ENCODE measurements at regions of chr7 and their contacts with region 1.

Region 1: DNA sequence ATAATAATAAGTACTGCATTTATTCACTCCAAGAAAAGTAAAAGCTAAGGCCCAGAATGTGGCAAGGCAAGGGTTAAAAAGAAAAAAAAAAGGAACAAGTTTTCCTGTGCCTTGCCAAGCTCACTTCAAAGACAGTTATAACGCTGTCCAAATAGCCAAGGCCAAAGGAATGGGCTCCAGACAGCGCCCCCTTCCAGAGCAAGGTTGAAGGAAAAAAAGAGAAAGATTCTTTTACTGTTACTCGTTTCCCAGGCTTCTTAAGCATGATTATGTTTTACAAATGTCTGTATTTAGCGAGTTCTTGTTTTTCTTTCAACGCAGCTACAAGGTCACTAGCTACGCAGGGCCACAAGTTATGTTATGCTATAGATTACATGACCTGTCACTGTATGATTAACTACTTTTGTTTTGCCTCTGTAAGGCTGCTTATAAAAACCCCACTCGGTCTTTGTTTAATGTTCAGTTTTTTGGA is 9.1 kb upstream of the EIF4H start:
- DNase-seq: no peak
- H3K4me3 ChIP-seq: no peak overlapping the region
- H3K27ac ChIP-seq: peak overlapping the region; percentile 31 to 58 (median 48)
- H3K4me1 ChIP-seq: peaks cover 0 to 13% (median 10%) of the 10 kb centered on the region in 4 donors
- H3K27me3 ChIP-seq: no peaks in the 10 kb centered on the region
- CTCF ChIP-seq: peak in 1 of 4 experiments; percentile 22
- EP300 ChIP-seq: no peak
- POLR2A ChIP-seq: no peak

Region 2: DNA sequence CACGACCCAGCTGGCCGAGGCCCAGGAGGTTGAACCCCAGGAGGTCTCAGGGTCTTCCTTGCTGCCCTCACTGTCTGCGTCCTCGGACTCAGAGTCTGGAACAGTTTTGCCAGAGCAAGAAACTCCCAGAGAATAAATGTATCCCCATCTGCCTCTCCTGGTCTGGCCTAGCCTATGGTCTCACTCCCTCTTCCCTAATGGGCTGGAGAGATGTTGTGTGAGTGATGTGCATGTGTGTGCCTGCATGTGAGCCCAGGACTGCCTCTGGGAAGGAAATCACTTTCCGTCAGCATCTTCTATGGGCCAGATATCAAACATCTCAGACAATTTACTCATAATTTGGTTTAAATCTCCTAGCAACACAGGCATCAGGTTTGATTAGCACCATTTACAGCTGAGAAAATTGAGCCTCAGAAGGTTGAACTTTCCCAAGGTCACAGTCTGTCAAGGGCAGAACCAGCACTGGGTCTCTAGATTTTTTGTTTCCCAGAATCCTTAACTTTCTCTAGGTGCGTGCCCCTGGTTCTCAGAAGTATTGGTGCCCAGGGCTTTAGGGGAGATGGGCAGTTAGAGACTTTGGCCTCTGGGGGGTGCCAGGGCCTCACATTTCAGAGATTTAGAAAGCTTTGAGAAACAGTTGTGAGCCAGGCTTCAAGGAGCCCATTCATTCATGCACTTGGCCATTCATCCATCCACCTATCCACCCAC is 299.1 kb before region 1 on chr7:
- intact Hi-C with region 1: loop called (anchors 10 kb)
- DNase-seq: no peak
- H3K4me3 ChIP-seq: no peak overlapping the region
- H3K27ac ChIP-seq: no peak overlapping the region
- H3K4me1 ChIP-seq: peaks cover 0 to 25% (median 19%) of the 10 kb centered on the region in 4 donors
- H3K27me3 ChIP-seq: no peaks in the 10 kb centered on the region
- CTCF ChIP-seq: peak; percentile 23 to 68 (median 61)
- EP300 ChIP-seq: no peak
- POLR2A ChIP-seq: no peak

Measured in sigmoid colon (tissue), 7 donors.